Ovary (tissue), 10 donors: ENCODE measurements at regions of chr5 and their contacts with region 1.

Region 1: GRCh38 chr5:132988124-132988408 is 24.6 kb upstream of the AFF4 start:
- DNase-seq: no peak
- H3K4me3 ChIP-seq: no peak overlapping the region
- H3K27ac ChIP-seq: no peak overlapping the region
- H3K4me1 ChIP-seq: no peaks in the 10 kb centered on the region
- H3K27me3 ChIP-seq: no peaks in the 10 kb centered on the region
- CTCF ChIP-seq: no peak
- EP300 ChIP-seq: no peak
- POLR2A ChIP-seq: no peak

Region 2: GRCh38 chr5:133384120-133384855 is 396.2 kb after region 1 on chr5:
- intact Hi-C with region 1: loop called in 1 of 4 experiments (anchors 5 kb)
- DNase-seq: no peak
- H3K4me3 ChIP-seq: no peak overlapping the region
- H3K27ac ChIP-seq: no peak overlapping the region
- H3K4me1 ChIP-seq: no peaks in the 10 kb centered on the region
- H3K27me3 ChIP-seq: no peaks in the 10 kb centered on the region
- CTCF ChIP-seq: no peak
- EP300 ChIP-seq: no peak
- POLR2A ChIP-seq: no peak